ENCODE measurements at regions of chr9 and their contacts with region 1.

Region 1: DNA sequence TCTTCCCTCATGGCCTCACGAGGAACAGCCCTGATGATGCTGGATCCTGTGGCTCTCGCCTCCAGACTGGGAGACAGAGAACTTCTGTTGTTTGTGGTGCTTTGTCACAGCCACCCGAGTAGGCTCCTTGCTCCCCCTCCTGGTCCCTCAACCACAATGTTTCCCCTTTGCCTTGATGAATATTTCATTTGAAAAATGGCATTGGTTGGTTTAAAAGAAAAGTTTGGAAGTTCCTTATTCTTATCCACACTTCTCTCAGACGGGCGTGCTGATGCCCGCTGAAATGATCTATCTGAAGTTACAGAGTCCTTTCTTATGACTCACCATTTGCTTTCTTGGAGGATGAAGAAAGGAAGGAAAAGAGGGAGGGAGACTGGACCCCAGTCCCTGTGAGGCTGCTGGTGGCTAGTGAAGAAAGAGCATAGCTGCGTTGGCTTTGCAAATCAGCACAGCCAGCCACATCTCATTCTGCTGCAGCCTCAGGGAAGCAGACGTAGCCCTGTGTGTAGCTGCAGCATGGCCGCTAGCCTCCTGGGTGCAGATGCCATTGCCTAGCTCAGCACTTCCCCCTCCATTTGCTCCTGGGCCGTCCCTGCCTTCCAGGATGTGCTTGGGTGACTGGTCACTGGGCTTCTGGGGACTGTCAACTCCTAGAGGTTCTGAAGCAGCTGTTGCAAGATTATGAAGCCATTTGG is 185.9 kb downstream of the ERCC6L2 start:
- DNase-seq: peak; percentile 19 to 65 (median 56)
- ATAC-seq: peak; percentile 67
- H3K4me3 ChIP-seq: no peak overlapping the region
- H3K4me3 Mint-ChIP-seq: no peak overlapping the region
- H3K27ac ChIP-seq: no peak overlapping the region
- H3K27ac Mint-ChIP-seq: no peak overlapping the region
- H3K4me1 ChIP-seq: peaks cover 5% of the 10 kb centered on the region
- H3K4me1 Mint-ChIP-seq: peaks cover 13% of the 10 kb centered on the region
- H3K27me3 ChIP-seq: no peaks in the 10 kb centered on the region
- H3K27me3 Mint-ChIP-seq: peaks cover 2% of the 10 kb centered on the region
- CTCF ChIP-seq: peak; percentile 71

Region 2: GRCh38 chr9:95379630-95380029 is 681.8 kb before region 1 on chr9:
- CTCF ChIA-PET with region 1: interaction called, 4 read pairs
- POLR2A ChIA-PET with region 1: no interaction called
- intact Hi-C with region 1: loop called in 1 of 2 experiments (anchors 1 kb)
- DNase-seq: peak in 4 of 9 experiments; percentile 15 to 56 (median 50)
- ATAC-seq: no peak
- H3K4me3 ChIP-seq: no peak overlapping the region
- H3K4me3 Mint-ChIP-seq: no peak overlapping the region
- H3K27ac ChIP-seq: no peak overlapping the region
- H3K27ac Mint-ChIP-seq: no peak overlapping the region
- H3K4me1 ChIP-seq: no peaks in the 10 kb centered on the region
- H3K4me1 Mint-ChIP-seq: no peaks in the 10 kb centered on the region
- H3K27me3 ChIP-seq: peaks cover 0 to 5% of the 10 kb centered on the region in 2 experiments
- H3K27me3 Mint-ChIP-seq: peaks cover 29% of the 10 kb centered on the region
- CTCF ChIP-seq: peak; percentile 33

Region 3: DNA sequence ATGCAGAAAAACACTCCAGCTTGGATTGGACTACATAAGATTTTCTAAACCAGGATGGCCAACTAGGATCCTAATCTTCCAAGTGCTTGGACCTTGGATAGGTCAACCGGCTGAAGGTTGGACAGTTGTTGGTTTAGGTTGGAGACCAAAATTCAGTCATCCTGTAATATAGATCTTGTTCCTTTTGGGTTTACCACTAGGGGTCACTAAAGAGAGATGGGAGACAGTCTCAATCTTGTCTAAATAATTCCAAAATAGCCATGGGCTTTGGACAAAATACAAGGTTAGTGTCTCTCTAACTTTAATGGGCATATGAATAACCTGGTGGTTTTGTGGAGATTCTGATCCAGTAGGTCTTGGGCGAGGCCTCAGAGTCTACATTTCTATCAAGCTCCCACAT is 334.7 kb before region 1 on chr9:
- CTCF ChIA-PET with region 1: no interaction called
- POLR2A ChIA-PET with region 1: no interaction called
- intact Hi-C with region 1: loop called in 1 of 2 experiments (anchors 5 kb)
- DNase-seq: peak in 2 of 9 experiments; percentile 39 to 55
- ATAC-seq: no peak
- H3K4me3 ChIP-seq: no peak overlapping the region
- H3K4me3 Mint-ChIP-seq: no peak overlapping the region
- H3K27ac ChIP-seq: no peak overlapping the region
- H3K27ac Mint-ChIP-seq: no peak overlapping the region
- H3K4me1 ChIP-seq: peaks cover 28% of the 10 kb centered on the region
- H3K4me1 Mint-ChIP-seq: peaks cover 47% of the 10 kb centered on the region
- H3K27me3 ChIP-seq: no peaks in the 10 kb centered on the region
- H3K27me3 Mint-ChIP-seq: peaks cover 2% of the 10 kb centered on the region
- CTCF ChIP-seq: peak; percentile 46

Region 4: GRCh38 chr9:95981761-95982390 is 79.6 kb before region 1 on chr9:
- CTCF ChIA-PET with region 1: no interaction called
- POLR2A ChIA-PET with region 1: no interaction called
- intact Hi-C with region 1: loop called in 1 of 2 experiments (anchors 5 kb)
- DNase-seq: peak in 5 of 9 experiments; percentile 18 to 75 (median 39)
- ATAC-seq: peak; percentile 92
- H3K4me3 ChIP-seq: no peak overlapping the region
- H3K4me3 Mint-ChIP-seq: peak overlapping the region; percentile 47
- H3K27ac ChIP-seq: peak overlapping the region in 1 of 2 experiments; percentile 66
- H3K27ac Mint-ChIP-seq: peak overlapping the region; percentile 89
- H3K4me1 ChIP-seq: peaks cover 21% of the 10 kb centered on the region
- H3K4me1 Mint-ChIP-seq: peaks cover 30% of the 10 kb centered on the region
- H3K27me3 ChIP-seq: no peaks in the 10 kb centered on the region
- H3K27me3 Mint-ChIP-seq: no peaks in the 10 kb centered on the region
- CTCF ChIP-seq: no peak